Heart left ventricle (tissue), 16 donors: ENCODE measurements at regions of chr1 and their contacts with region 1.

Region 1: DNA sequence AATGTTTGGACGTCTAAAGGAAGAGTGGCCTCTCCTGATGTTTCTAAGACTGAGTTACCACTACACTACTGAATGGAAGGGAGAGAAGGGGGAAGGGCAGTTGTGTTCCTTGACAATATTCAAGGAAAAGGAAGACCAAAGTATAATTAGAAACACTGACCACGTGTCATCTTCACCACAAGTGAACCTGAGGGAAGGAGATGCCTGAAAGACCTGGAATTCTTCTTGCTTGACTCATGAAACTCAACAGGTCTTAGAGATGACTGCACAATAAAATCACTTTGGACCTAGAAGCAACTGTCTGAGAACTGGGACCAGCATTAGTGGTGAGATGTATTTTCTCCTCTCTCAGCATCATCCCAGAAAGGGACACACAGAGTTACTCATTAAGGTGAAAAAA is 56.7 kb downstream of the PTPN14 start:
- DNase-seq: no peak
- ATAC-seq: no peak
- H3K4me3 ChIP-seq: no peak overlapping the region
- H3K27ac ChIP-seq: no peak overlapping the region
- H3K4me1 ChIP-seq: peaks cover 5 to 50% (median 18%) of the 10 kb centered on the region in 12 donors
- H3K27me3 ChIP-seq: no peaks in the 10 kb centered on the region
- CTCF ChIP-seq: no peak
- POLR2A ChIP-seq: no peak

Region 2: DNA sequence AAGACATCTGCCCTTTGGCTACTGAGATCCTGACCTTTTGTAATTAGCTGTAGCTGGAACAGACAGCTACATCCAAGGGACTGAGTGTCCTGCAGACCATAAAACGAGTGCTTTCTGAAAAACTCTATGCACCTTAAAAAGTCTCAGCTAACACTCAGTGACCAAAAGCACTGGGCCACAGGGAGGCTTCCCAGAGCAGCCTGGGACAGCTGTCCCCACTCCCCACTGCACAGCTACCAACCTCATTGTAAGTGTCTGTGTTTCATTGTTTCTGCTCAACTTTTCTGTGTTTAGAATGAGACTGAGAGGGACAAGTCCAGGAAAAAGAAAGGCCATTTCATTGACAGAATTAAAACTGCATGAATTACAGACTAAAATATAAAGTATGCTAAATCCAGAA is 133.1 kb before region 1 on chr1:
- intact Hi-C with region 1: no loop called
- DNase-seq: no peak
- ATAC-seq: peak in 2 of 4 donors; percentile 9 to 16
- H3K4me3 ChIP-seq: no peak overlapping the region
- H3K27ac ChIP-seq: peak overlapping the region; percentile 63 to 95 (median 82)
- H3K4me1 ChIP-seq: peaks cover 0 to 50% (median 33%) of the 10 kb centered on the region in 12 donors
- H3K27me3 ChIP-seq: no peaks in the 10 kb centered on the region
- CTCF ChIP-seq: no peak
- POLR2A ChIP-seq: no peak

Region 3: DNA sequence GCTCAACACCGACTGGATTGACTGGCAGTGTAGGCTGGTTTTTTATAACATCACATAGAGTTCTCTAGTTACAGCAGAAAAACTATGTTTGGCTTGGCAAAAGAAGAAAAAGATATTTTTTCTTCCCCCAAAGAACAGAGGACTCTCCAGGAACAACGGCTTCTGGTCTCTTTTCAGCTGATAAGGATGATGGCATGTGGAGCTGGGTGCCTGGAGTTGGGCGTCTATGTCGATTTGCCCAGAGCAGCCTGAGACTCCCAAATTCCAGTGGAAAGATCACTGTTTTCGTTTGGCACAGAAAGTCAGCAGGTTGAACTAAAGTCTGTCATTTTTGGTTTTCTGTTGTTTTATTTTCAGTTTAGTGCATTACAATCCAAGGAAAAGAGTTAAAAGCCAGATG is 122.6 kb before region 1 on chr1:
- intact Hi-C with region 1: no loop called
- DNase-seq: no peak
- ATAC-seq: peak in 3 of 4 donors; percentile 54 to 84 (median 60)
- H3K4me3 ChIP-seq: no peak overlapping the region
- H3K27ac ChIP-seq: peak overlapping the region in 7 of 12 donors; percentile 43 to 78 (median 54)
- H3K4me1 ChIP-seq: peaks cover 0 to 37% (median 15%) of the 10 kb centered on the region in 12 donors
- H3K27me3 ChIP-seq: no peaks in the 10 kb centered on the region
- CTCF ChIP-seq: no peak
- POLR2A ChIP-seq: no peak

Region 4: DNA sequence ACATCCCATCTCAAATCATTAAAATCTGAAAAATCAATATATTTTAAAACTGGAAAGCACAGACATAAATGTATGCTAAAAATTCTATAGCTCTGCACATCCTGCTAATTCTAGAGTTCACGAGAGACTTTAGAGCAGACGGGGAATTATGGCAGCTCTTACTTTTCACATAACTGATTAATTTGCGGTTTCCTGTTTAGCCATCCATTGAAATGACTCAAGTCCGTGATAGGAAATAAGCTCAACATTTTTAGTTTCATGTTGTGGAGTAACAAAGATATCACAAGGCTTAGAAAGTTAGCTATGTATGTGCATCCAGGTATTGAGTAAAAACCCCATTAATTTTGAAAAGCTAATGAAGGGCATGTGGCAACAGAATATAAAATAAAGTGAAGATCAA is 90.6 kb before region 1 on chr1:
- intact Hi-C with region 1: loop called in 1 of 10 experiments (anchors 10 kb)
- DNase-seq: no peak
- ATAC-seq: no peak
- H3K4me3 ChIP-seq: no peak overlapping the region
- H3K27ac ChIP-seq: peak overlapping the region in 1 of 12 donors; percentile 8
- H3K4me1 ChIP-seq: peaks cover 0 to 21% (median 1%) of the 10 kb centered on the region in 12 donors
- H3K27me3 ChIP-seq: no peaks in the 10 kb centered on the region
- CTCF ChIP-seq: no peak
- POLR2A ChIP-seq: no peak

Region 5: DNA sequence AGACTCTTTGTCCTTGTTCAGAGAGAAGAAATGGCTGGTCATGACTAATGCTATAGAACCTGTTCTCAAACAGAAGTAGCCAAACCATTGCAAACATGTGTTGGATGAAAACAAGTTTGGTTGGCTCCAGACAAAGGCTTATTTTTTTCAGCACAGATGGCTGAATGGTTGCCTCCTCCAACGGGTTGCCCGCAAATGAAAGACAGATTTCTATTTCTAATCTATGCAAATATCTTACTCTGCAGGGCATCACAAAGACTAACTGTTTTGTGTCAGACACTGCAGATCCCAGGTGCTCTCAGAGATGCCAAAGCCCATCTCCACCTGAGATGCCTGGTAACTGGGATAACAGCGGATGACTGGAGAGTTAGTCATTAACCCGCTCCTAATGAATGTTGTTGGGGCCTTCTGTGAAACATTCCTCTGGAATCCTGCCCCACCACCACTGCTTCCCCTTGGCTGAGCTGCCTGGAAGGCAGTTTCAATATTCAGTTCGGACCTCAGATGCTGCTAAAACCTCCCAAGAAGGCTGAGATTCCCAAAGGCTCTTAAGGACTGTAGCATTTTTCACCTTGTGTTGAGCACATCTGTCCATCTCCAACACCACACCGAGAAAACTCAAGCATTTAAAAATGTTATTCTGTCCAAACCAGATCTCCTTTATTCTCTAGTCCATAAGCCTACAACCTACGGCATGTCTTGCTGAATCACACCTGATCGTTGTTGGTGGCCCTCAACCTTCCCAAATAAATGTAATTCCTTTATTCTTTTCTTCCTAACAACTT is 47.7 kb before region 1 on chr1:
- intact Hi-C with region 1: no loop called
- DNase-seq: no peak
- ATAC-seq: peak in 1 of 4 donors; percentile 68
- H3K4me3 ChIP-seq: no peak overlapping the region
- H3K27ac ChIP-seq: peak overlapping the region in 2 of 12 donors; percentile 45
- H3K4me1 ChIP-seq: peaks cover 0 to 43% (median 20%) of the 10 kb centered on the region in 12 donors
- H3K27me3 ChIP-seq: no peaks in the 10 kb centered on the region
- CTCF ChIP-seq: no peak
- POLR2A ChIP-seq: no peak